ENCODE measurements at regions of chr16 and their contacts with region 1.

Region 1: DNA sequence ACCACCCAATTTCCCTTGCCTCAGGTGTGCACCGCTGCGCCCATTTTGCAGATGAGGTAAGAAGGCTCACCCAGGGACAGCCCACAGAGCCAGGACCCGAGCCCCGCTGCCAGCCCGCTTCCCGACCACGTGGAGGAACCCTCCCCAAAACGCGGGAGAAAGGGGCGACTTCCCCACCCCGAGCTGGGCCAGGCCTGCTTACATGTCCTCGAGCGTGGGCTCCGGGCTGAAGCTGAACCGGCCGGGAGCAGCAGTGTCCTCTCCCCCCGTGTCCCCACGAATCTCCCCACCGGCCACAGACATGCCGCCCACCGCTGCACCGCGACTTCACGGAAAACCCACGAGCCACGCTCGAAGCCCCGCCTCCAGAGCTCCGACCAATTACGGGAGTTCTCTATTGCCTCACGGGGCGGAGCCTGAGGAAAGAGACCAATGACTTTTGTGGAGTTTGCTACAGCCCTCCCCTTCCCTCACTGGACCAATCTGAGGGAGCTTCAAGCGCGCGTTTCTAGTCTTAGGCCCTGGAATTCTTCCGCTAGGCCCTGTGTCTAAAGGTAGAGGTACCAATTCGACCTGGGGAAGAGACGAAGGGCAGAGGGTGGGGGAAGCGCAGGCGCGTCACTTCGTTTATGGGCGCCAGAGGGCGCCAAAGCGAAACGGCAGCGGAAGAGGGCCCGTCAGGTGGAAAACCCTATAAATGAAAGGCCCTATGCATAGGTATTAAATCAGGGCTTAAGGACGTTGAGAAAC is at the start of gene DCTPP1:
- DNase-seq: peak; percentile 97
- H3K4me3 ChIP-seq: peak within 1 kb of the TSS; percentile 58 to 61
- H3K27ac ChIP-seq: peak within 1 kb of the TSS; percentile 55 to 66
- H3K4me1 ChIP-seq: peaks cover 4% of the 10 kb centered on the region
- H3K27me3 ChIP-seq: no peaks in the 10 kb centered on the region
- CTCF ChIP-seq: peak; percentile 61 to 96 (median 90)
- POLR2A ChIP-seq: peak; percentile 57
- total RNA-seq, gene DCTPP1: 31.6 to 37.6 TPM

Region 2: GRCh38 chr16:30491744-30492308 is 62.0 kb after region 1 on chr16:
- intact Hi-C with region 1: no loop called
- DNase-seq: peak; percentile 25
- H3K4me3 ChIP-seq: no peak overlapping the region
- H3K27ac ChIP-seq: no peak overlapping the region
- H3K4me1 ChIP-seq: no peaks in the 10 kb centered on the region
- H3K27me3 ChIP-seq: no peaks in the 10 kb centered on the region
- CTCF ChIP-seq: no peak
- POLR2A ChIP-seq: no peak

Region 3: GRCh38 chr16:30526823-30527635 is 97.2 kb after region 1 on chr16:
- intact Hi-C with region 1: loop called (anchors 5 kb)
- DNase-seq: peak; percentile 99
- H3K4me3 ChIP-seq: peak overlapping the region; percentile 77 to 94
- H3K27ac ChIP-seq: peak overlapping the region; percentile 96 to 99
- H3K4me1 ChIP-seq: no peaks in the 10 kb centered on the region
- H3K27me3 ChIP-seq: no peaks in the 10 kb centered on the region
- CTCF ChIP-seq: peak in 2 of 4 experiments; percentile 41 to 50
- POLR2A ChIP-seq: peak; percentile 42

Region 4: DNA sequence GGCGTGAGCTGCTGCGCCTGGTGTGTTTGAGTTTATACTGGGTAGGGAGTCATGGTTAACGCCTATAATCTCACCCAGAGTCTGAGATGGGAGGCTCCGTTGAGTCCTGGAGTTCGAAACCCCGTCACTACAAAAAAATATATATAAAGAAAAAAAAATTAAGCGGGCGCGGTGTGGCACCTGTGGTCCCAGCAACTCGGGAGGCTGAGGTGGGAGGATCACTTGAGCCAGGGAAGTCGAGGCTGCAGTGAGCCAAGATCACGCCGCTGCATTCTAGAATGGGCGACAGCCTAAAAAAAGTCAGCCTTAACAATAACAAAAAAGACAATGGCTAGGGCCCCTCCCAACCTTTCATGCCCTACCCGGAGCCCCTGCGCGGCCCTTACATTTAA is 203.7 kb after region 1 on chr16:
- intact Hi-C with region 1: loop called (anchors 5 kb)
- DNase-seq: no peak
- H3K4me3 ChIP-seq: peak overlapping the region; percentile 61 to 64
- H3K27ac ChIP-seq: peak overlapping the region; percentile 85 to 90
- H3K4me1 ChIP-seq: no peaks in the 10 kb centered on the region
- H3K27me3 ChIP-seq: no peaks in the 10 kb centered on the region
- CTCF ChIP-seq: no peak
- POLR2A ChIP-seq: no peak